Activated T-helper 1 cell treated with anti-CD3 and anti-CD28 coated beads, Interleukin-12 subunit alpha, Interleukin-12 subunit beta, Interleukin-2, Interleukin-4 antibody, amounts not matched to agents 30 ng/mL and 10 ng/mL and 1 ng/mL, durations not matched to agents 14 hours and 24 hours and 36 hours (primary cell): ENCODE measurements at regions of chr2 and their contacts with region 1.

Region 1: GRCh38 chr2:128473175-128474035 is 154.7 kb upstream of the HS6ST1 start:
- DNase-seq: peak; percentile 26
- H3K4me3 Mint-ChIP-seq: peak overlapping the region; percentile 67
- H3K27ac Mint-ChIP-seq: peak overlapping the region; percentile 86
- H3K4me1 Mint-ChIP-seq: peaks cover 20% of the 10 kb centered on the region
- H3K27me3 Mint-ChIP-seq: peaks cover 6% of the 10 kb centered on the region

Region 2: DNA sequence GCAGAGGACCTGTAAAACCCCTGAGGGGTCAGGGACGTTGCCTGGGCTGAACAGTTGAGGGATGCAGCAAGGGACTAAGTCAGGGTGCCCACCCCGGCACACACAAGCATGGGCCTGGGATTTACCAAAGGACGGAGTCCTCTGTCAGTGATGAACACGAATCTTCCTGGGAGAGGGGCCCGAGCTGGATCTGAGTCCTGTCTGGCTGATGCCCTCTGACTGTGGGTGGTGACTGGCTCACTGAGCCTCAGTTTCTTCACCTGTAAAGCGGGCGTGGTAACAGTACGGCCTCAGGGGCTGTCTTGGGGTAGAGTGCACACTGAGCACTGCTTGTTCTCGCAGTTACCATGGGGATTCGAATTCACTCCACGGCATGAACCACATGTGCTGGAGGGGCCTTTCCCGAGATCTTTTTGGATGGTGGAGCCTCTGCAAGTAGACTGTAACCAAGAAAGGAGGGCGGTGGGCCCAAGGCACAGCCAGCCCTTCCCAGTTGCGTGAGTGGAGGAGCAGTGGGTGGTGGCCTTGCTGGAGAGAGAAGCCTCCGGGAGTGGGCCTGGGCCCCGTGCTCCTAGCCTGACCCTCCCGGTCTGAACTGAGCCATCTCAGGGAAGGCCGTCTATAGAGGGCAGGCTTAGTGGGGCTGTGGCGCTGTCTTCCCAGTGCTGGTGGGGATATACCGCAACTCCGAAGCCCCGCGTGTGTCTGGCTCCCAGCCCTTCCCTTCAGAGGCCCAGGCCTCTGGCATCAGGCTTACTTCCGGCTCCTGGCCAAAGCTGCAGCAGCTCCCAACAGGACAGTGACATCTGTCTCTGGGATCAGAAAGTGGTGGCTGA is 24.0 kb before region 1 on chr2:
- intact Hi-C with region 1: no loop called
- DNase-seq: no peak
- H3K4me3 Mint-ChIP-seq: no peak overlapping the region
- H3K27ac Mint-ChIP-seq: no peak overlapping the region
- H3K4me1 Mint-ChIP-seq: no peaks in the 10 kb centered on the region
- H3K27me3 Mint-ChIP-seq: peaks cover 3% of the 10 kb centered on the region

Region 3: DNA sequence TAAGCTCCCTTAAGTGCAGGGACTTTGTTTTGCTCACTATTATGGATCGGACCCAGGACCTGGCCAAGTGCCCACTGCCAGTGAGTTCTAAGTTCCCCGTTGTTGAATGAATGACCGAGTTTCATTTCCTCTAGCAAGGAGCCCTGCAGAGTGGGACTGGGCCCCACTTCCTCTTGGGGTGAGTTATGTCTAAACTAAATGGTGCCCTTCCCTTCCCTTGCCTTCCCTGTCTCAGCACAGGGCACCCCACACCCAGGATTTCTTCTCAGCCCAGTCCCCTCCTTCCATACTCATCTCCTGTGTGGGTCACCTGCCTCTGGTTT is 40.5 kb after region 1 on chr2:
- intact Hi-C with region 1: no loop called
- DNase-seq: no peak
- H3K4me3 Mint-ChIP-seq: no peak overlapping the region
- H3K27ac Mint-ChIP-seq: no peak overlapping the region
- H3K4me1 Mint-ChIP-seq: peaks cover 11% of the 10 kb centered on the region
- H3K27me3 Mint-ChIP-seq: peaks cover 4% of the 10 kb centered on the region

Region 4: GRCh38 chr2:128536925-128537620 is 63.7 kb after region 1 on chr2:
- intact Hi-C with region 1: loop called (anchors 2 kb)
- DNase-seq: no peak
- H3K4me3 Mint-ChIP-seq: no peak overlapping the region
- H3K27ac Mint-ChIP-seq: peak overlapping the region; percentile 4
- H3K4me1 Mint-ChIP-seq: peaks cover 24% of the 10 kb centered on the region
- H3K27me3 Mint-ChIP-seq: peaks cover 22% of the 10 kb centered on the region